Motor neuron (in vitro differentiated cells): ENCODE measurements at regions of chr3 and their contacts with region 1.

Region 1: DNA sequence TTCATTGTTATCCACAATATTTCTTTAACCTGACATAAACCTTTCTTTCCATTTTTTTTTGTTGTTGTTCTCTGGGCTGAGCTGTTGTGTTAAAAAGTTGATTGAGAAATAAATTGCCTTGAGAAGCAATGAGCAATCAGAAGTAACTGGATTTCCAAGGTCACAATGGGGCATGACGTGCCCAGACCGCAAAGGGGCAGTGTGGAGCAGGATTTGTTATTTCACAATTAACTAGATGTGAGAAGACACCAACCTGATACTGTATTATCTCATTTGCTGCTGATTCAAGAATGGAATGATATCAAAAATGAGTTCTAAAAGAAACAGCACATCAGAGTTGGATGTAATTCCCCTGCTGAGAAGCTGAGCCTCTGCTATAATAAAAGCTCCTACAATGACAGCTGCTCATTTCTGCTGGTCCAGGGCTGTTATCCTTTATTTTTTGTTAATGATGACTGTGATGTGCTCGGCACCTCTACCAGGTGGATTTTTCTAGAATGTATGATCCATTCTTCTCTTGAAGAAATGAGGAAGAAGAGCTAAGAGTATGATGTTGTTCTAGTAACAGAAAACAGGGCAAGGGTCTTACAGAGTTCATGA is 28.1 kb downstream of the CPNE4 start:
- ATAC-seq: peak in 2 of 8 experiments; percentile 38 to 49
- H3K4me3 ChIP-seq: no peak overlapping the region
- H3K27ac ChIP-seq: no peak overlapping the region
- H3K4me1 ChIP-seq: peaks cover 4 to 5% of the 10 kb centered on the region in 2 donors

Region 2: DNA sequence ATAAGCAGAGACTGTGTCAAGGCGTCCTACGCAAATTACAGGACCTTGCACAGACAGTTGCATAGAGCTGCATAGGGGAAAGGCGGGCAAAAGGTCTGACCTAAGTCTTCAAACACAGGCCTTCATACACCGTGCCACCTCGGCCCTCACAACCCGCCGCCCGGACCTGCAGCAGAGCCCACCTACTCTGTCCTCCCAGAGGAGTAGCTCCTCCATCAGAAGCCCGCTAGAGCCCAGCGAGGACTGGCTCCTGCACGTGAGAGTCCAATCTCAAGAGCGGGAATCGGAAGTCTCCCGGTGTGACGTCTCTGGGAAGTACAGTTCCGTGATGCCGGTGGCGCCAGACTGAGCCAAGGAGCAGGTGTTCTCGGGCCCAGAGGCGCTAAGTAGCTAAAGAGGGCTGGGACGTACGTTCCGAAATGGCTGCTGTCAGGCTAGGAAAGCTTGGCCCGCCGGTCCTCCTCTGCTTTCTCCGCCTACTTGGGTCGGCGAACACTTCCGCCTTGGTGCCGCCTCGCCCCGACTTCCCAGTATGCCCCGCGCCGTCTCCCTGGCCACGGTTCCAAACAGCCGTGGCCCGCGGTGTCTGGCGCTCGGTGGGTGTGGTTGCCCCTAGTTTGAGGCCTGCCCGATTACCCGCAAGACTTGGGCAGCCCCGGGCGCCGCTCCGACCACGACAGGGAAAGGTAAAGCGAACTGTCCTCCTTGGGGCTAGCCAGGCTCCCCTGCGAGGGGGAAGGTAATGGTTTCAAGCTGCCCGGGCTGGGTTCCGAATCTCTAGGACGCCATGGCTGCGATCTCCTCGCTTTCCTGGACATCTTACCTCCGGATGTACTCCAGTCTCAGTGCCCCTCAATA is 980.2 kb before region 1 on chr3 and contains the starts of genes ASTE1 and NEK11:
- in situ Hi-C with region 1: loop called in 3 of 9 experiments (anchors 25 kb)
- ATAC-seq: peak; percentile 86 to 98 (median 96)
- H3K4me3 ChIP-seq: peak within 1 kb of the TSS; percentile 28 to 41 (median 33)
- H3K27ac ChIP-seq: peak within 1 kb of the TSS in 1 of 2 donors; percentile 29
- H3K4me1 ChIP-seq: no peaks in the 10 kb centered on the region
- total RNA-seq, gene ASTE1: 1.1 to 7.5 (median 3.5) TPM
- total RNA-seq, gene NEK11: 1.1 to 10.3 (median 3.4) TPM

Region 3: DNA sequence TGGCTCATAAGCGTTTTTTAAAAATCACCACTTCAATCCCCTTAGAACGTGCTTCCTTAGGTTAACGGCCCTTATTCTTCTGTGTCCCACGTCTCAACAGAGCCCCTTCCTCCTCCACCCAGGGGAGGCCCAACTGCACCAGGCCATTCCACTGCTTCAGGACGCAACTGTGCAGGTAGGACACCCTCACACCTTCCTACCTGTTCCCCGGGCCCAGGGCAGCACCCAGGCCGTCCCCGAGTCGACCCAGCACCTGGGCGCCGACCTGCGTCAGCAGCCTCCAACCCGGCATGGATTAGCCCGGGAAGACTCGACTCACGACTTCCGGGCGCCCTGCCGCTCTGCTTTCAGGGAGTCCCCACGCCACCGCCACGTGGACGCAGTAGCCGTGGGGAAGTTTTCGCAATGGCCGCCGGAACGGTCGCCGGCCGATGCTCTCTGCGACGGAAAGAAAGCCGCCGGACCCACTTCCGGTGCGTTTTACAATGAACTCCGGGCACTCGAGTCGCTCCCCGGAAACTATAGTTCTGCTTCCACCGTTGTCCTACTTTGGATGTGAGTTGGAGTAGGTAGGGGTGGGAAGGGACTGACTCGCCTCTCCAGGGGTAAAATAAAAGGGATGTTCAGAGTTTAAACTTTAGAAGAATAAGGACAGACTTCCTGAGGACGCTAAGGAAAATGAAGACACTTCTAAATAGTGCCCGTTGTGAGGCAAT is 504.0 kb before region 1 on chr3 and contains the start of gene MRPL3:
- in situ Hi-C with region 1: loop called in 1 of 9 experiments (anchors 25 kb)
- ATAC-seq: peak; percentile 93 to 97 (median 96)
- H3K4me3 ChIP-seq: peak within 1 kb of the TSS; percentile 65 to 97 (median 89)
- H3K27ac ChIP-seq: peak within 1 kb of the TSS; percentile 88 to 95
- H3K4me1 ChIP-seq: peaks cover 11 to 16% of the 10 kb centered on the region in 2 donors
- total RNA-seq, gene MRPL3: 78.2 to 172 (median 113) TPM

Region 4: DNA sequence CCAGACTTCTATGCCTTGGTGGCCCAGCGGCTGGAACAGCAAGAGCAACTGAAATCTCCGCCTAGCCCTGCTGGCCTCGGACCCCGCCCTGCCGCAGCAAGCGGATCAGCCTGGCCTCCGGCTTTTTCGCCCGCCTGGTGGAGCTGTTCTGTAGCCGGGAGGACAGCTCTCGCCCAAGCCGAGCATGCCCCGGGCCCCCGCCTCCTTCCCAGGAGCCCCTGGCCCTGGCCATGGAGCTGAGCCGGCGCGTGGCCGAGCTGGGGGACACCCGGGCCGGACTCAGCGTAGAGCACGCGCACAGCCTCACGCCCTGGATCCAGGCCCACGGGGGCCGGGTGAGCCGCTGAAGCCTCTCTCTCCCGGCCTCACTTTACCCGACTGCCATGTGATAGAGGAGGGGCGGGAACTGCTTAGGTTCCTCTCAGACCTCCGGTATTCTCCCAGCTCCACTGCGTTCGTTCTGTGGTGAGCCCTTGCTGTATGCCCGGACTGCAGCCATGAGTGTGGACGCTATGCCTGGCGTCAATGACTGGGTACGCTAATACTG is 479.8 kb before region 1 on chr3:
- in situ Hi-C with region 1: loop called in 3 of 9 experiments (anchors 25 kb)
- ATAC-seq: peak; percentile 33 to 100 (median 64)
- H3K4me3 ChIP-seq: no peak overlapping the region
- H3K27ac ChIP-seq: no peak overlapping the region
- H3K4me1 ChIP-seq: no peaks in the 10 kb centered on the region

Region 5: GRCh38 chr3:131553495-131554247 is 453.0 kb before region 1 on chr3:
- in situ Hi-C with region 1: loop called in 3 of 9 experiments (anchors 25 kb)
- ATAC-seq: no peak
- H3K4me3 ChIP-seq: no peak overlapping the region
- H3K27ac ChIP-seq: no peak overlapping the region
- H3K4me1 ChIP-seq: no peaks in the 10 kb centered on the region

Region 6: DNA sequence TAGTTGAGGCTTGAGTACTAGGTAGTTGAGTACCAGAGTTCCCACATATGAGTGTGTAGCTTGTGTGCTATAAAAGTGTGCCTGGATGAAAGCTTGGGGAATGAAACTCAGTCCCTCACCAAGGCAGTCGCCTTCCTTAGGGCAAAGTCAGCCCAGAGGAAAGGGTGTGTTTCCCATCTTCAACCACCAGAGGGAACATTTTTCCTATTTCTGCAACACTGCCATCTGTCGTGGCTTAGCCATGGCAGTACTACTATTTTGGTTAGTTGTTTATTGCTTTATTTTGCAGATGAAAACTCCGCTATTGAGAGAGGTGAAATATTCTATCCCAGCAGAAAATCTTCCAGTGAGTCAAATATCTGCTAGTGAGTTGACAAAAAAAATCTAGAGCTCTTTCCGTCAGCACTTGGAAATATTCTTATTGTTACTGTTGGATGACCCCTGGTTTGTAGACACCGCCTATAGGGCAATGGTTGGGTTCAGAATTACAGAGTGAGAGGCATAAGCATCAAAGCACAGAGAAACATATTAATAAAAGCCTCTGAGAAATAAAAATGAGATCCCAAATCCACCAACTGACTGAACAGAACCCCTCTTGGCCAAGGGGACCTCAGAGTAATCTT is 211.8 kb before region 1 on chr3:
- in situ Hi-C with region 1: loop called in 3 of 9 experiments (anchors 25 kb)
- ATAC-seq: peak; percentile 58 to 86 (median 73)
- H3K4me3 ChIP-seq: no peak overlapping the region
- H3K27ac ChIP-seq: no peak overlapping the region
- H3K4me1 ChIP-seq: peaks cover 18 to 28% of the 10 kb centered on the region in 2 donors

Region 7: GRCh38 chr3:131804565-131805133 is 202.1 kb before region 1 on chr3:
- in situ Hi-C with region 1: loop called in 3 of 9 experiments (anchors 25 kb)
- ATAC-seq: no peak
- H3K4me3 ChIP-seq: no peak overlapping the region
- H3K27ac ChIP-seq: no peak overlapping the region
- H3K4me1 ChIP-seq: no peaks in the 10 kb centered on the region

Region 8: GRCh38 chr3:132268956-132269355 is 262.3 kb after region 1 on chr3:
- in situ Hi-C with region 1: no loop called
- ATAC-seq: peak in 1 of 8 experiments; percentile 14
- H3K4me3 ChIP-seq: no peak overlapping the region
- H3K27ac ChIP-seq: no peak overlapping the region
- H3K4me1 ChIP-seq: no peaks in the 10 kb centered on the region

Region 9: DNA sequence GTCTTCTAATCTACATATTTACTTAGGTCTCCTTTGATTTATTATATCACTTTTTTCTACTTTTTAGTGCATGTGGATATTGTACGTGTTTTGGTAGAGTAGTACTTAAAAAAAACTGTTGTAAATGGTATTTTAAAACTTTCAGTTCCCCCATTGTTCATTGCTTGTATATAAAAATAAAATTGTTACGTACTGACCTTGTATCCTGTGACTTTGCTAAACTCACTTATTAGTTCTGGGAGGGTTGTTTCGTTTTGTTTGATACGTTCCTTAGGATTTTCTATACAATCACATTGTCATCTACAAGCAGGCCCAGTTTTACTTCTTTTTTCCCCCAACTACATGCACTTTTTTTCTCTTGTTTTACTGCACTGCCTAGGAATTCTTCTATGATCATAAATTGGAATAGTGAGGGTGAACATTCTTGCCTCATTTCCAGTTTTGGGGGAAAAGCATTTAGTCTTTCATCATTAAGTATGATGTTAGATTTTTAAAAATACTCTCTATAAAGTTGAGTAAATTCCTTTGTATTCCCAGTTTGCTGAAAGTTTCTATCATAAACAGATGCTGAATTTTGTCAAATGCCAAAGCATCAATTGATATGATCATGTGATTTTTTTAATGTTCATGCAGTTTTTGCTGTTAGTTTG is 556.8 kb after region 1 on chr3:
- in situ Hi-C with region 1: no loop called
- ATAC-seq: no peak
- H3K4me3 ChIP-seq: no peak overlapping the region
- H3K27ac ChIP-seq: no peak overlapping the region
- H3K4me1 ChIP-seq: no peaks in the 10 kb centered on the region